ENCODE measurements at regions of chr17 and their contacts with region 1.

Region 1: DNA sequence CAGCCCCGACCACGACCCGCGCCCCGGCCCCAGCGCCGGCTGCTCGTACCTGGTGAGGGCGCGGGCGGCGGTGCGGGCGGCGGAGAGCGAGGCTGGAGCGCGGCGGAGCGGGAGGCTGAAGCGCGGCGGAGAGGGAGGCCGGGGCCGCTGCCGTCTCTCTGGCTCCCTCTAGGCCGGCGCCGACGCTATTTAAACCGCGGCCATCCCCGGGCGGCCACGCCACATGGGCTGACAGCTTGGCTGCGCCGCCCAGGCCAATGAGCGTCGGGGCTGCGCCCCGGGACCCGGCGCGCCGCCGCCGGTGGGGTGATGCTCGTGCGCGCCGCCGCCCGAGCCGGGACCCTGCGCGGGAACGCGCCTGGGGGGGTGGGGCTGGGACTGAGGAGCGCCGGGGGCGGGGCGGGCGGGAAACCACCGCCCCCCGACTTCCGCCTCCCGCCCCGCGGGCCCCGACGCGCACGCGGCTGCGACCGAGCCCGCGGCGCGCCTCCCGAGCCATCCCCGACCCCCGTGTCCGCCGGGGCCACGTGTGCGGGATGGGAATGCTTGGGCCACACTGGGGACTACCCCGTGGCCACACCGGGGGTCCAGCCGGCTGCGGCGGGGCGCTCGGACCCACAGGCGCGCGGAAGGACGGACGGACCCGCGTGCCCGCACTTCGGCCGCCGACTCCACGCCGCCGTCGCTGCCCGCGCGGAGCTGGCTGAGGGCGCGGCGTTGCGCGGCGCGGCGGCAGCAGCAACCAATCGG is at the start of gene FASN:
- DNase-seq: peak; percentile 84 to 91 (median 86)
- H3K4me3 ChIP-seq: peak within 1 kb of the TSS; percentile 36 to 73 (median 43)
- H3K4me3 Mint-ChIP-seq: peak within 1 kb of the TSS; percentile 64 to 65
- H3K27ac ChIP-seq: peak within 1 kb of the TSS; percentile 73 to 82
- H3K27ac Mint-ChIP-seq: peak within 1 kb of the TSS in 1 of 7 donors; percentile 66
- H3K4me1 ChIP-seq: peaks cover 21 to 37% of the 10 kb centered on the region in 2 donors
- H3K4me1 Mint-ChIP-seq: peaks cover 19% of the 10 kb centered on the region
- H3K27me3 ChIP-seq: no peaks in the 10 kb centered on the region
- H3K27me3 Mint-ChIP-seq: peaks cover 0 to 4% (median 0%) of the 10 kb centered on the region in 3 donors
- CTCF ChIP-seq: peak; percentile 57
- polyA plus RNA-seq, gene FASN: 0.08 to 8.4 (median 0.13) TPM

Region 2: GRCh38 chr17:82051776-82052637 is 46.2 kb before region 1 on chr17 and contains the starts of genes GPS1 and RFNG:
- intact Hi-C with region 1: loop called in 1 of 2 experiments (anchors 5 kb)
- DNase-seq: peak; percentile 25 to 44 (median 33)
- H3K4me3 ChIP-seq: peak within 1 kb of the TSS; percentile 66 to 88 (median 70)
- H3K4me3 Mint-ChIP-seq: peak within 1 kb of the TSS; percentile 85 to 94
- H3K27ac ChIP-seq: peak within 1 kb of the TSS in 1 of 2 donors; percentile 64
- H3K27ac Mint-ChIP-seq: peak within 1 kb of the TSS in 5 of 7 donors; percentile 46 to 91 (median 76)
- H3K4me1 ChIP-seq: peaks cover 20 to 29% of the 10 kb centered on the region in 2 donors
- H3K4me1 Mint-ChIP-seq: peaks cover 19% of the 10 kb centered on the region
- H3K27me3 ChIP-seq: no peaks in the 10 kb centered on the region
- H3K27me3 Mint-ChIP-seq: no peaks in the 10 kb centered on the region
- CTCF ChIP-seq: no peak
- polyA plus RNA-seq, gene GPS1: 101 to 130 (median 110) TPM
- polyA plus RNA-seq, gene RFNG: 1.5 to 32.4 (median 4.1) TPM

Region 3: GRCh38 chr17:82065638-82066303 is 32.5 kb before region 1 on chr17 and contains the start of gene DUS1L:
- intact Hi-C with region 1: loop called in 1 of 2 experiments (anchors 1 kb)
- DNase-seq: peak; percentile 63 to 74 (median 67)
- H3K4me3 ChIP-seq: peak within 1 kb of the TSS; percentile 72 to 87 (median 75)
- H3K4me3 Mint-ChIP-seq: peak within 1 kb of the TSS; percentile 80 to 81
- H3K27ac ChIP-seq: peak within 1 kb of the TSS; percentile 8 to 79
- H3K27ac Mint-ChIP-seq: peak within 1 kb of the TSS in 6 of 7 donors; percentile 68 to 91 (median 86)
- H3K4me1 ChIP-seq: peaks cover 20 to 29% of the 10 kb centered on the region in 2 donors
- H3K4me1 Mint-ChIP-seq: peaks cover 22% of the 10 kb centered on the region
- H3K27me3 ChIP-seq: no peaks in the 10 kb centered on the region
- H3K27me3 Mint-ChIP-seq: no peaks in the 10 kb centered on the region
- CTCF ChIP-seq: no peak
- polyA plus RNA-seq, gene DUS1L: 23.9 to 175 (median 47.6) TPM

Region 4: DNA sequence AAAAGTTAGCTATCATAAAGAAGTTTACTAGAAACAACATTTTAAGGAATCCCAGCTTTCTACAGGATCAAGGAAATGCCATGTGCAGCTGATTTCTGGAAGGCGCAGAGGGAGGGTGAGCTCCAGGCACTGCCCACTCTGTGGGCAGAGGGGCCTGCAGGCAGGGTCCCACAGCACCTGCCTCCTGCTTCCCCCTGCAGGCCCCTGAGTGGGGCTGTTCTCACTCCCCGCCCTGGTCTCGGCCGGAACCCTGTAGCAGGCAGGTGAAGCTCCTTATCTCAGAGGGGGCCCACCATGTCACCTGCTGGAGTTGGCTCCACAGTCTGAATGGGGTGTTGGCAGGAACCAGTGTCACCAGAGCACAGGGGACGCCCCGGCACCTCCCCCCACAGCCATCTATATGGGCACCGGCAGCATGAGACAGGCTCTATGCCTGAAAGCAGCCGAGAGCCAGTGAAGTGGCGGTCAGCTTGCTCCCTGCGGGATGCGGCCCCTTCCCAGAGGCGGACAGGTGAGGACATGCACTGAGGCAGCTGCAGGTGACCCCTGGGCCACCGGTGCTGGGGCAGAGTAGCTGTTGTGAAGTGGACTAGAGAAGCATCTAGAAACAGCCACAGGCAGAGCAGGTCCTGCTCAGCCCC is 47.4 kb after region 1 on chr17:
- intact Hi-C with region 1: no loop called
- DNase-seq: no peak
- H3K4me3 ChIP-seq: no peak overlapping the region
- H3K4me3 Mint-ChIP-seq: no peak overlapping the region
- H3K27ac ChIP-seq: no peak overlapping the region
- H3K27ac Mint-ChIP-seq: no peak overlapping the region
- H3K4me1 ChIP-seq: no peaks in the 10 kb centered on the region
- H3K4me1 Mint-ChIP-seq: no peaks in the 10 kb centered on the region
- H3K27me3 ChIP-seq: no peaks in the 10 kb centered on the region
- H3K27me3 Mint-ChIP-seq: no peaks in the 10 kb centered on the region
- CTCF ChIP-seq: no peak